ENCODE measurements at regions of chr17 and their contacts with region 1.

Region 1: GRCh38 chr17:20992987-20993862 is 49.6 kb downstream of the USP22 start:
- DNase-seq: peak in 1 of 2 donors; percentile 45
- ATAC-seq: peak; percentile 55 to 57
- H3K4me3 ChIP-seq: peak overlapping the region in 2 of 4 donors; percentile 21 to 34
- H3K27ac ChIP-seq: no peak overlapping the region
- H3K4me1 ChIP-seq: peaks cover 8 to 21% of the 10 kb centered on the region in 2 donors
- H3K27me3 ChIP-seq: no peaks in the 10 kb centered on the region
- CTCF ChIP-seq: peak; percentile 81 to 88 (median 88)
- POLR2A ChIP-seq: no peak

Region 2: DNA sequence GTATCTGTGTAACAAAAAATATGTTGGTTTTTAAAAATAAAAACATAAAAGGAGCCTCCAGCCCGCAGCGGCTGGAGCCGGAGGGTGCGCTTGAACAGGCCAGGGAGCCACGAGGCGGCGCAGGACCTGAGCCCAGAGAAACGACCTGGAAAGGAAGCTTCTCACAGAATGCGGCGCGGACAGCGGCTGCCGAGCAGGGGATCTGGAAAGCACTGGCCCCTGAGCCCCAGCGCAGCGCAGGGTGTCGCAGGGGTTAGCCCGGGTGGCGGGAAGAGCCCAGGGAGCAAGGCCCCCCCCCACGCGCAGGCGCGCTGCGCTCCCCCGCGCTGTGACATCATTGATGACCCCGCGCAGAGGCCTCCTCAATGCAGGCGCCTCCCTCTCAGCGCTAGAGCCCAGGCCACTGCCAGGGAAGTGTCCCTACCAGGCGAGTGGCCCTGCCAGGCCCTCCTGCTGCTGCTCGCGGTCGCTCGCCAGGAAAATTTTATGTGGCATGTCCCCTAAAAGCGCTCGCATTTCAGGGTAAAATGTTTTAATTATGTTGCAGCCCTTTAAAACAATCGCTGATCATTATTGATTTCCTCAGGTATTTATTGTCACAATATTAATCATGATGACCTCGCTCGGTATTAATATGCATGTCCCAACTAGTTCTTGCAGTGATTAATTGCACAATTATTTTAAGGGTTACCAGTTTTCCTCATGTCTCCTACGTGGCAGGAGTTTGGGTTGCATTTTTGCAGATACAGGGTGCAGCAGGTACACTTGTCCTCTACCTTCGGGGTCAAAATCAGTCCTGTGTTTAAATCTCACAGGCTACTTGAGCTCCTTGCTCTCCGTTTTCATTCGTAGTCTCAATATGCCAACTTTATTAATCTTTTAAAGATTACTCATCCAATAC is 84.6 kb before region 1 on chr17:
- in situ Hi-C with region 1: no loop called
- intact Hi-C with region 1: loop called (anchors 5 kb)
- DNase-seq: peak; percentile 82 to 90
- ATAC-seq: peak; percentile 95 to 98
- H3K4me3 ChIP-seq: peak overlapping the region; percentile 58 to 85 (median 65)
- H3K27ac ChIP-seq: peak overlapping the region; percentile 88 to 96 (median 91)
- H3K4me1 ChIP-seq: peaks cover 6 to 16% of the 10 kb centered on the region in 2 donors
- H3K27me3 ChIP-seq: no peaks in the 10 kb centered on the region
- CTCF ChIP-seq: peak; percentile 47 to 73 (median 55)
- POLR2A ChIP-seq: peak in 1 of 2 donors; percentile 45

Region 3: GRCh38 chr17:20944014-20944865 is 49.0 kb before region 1 on chr17:
- in situ Hi-C with region 1: loop called in 1 of 4 experiments (anchors 10 kb)
- intact Hi-C with region 1: loop called (anchors 1 kb)
- DNase-seq: peak in 1 of 2 donors; percentile 56
- ATAC-seq: peak in 1 of 2 donors; percentile 84
- H3K4me3 ChIP-seq: no peak overlapping the region
- H3K27ac ChIP-seq: no peak overlapping the region
- H3K4me1 ChIP-seq: no peaks in the 10 kb centered on the region
- H3K27me3 ChIP-seq: no peaks in the 10 kb centered on the region
- CTCF ChIP-seq: peak in 4 of 5 experiments; percentile 19 to 66 (median 50)
- POLR2A ChIP-seq: no peak

Region 4: DNA sequence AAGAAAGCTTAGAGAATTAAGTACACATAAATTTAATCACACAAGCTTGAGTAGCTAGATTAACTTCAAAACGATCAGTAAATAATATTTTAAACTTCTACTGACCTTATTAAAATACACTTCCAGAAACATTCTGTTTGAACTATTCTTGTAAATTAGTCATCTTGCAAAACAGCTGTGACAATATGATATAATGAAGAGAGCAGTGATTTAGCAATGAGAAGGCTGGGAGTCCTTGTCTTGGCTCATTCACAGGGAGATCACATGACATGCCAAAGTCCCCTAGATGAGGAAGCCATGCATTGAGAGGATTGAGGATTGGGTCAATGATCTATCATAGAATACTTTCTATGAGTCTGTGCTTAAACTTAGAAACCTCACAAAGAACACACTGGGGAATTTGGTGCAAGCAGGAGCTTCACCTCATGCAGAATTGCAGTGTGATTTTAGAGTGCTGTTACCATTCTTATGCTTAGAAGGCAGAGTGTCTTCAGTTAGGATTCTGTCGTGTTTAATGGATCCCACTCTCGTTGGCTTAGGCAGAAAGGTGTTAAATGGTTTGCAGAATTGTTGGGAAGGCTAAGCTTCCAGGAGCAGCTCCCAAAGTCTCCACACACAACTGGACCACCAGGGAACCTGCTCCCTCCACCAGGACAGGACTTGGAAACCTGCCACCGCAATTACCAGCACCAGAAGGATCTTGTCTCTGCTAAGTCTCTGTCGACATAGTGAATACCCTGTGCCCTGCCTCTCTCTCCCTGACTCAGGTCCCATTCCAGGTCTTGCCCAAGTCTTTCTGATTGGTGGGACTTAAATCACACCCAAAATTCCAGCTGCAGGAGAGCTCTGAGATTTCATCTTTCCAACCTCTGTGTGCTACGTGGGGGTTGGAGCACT is 37.5 kb before region 1 on chr17:
- in situ Hi-C with region 1: no loop called
- intact Hi-C with region 1: no loop called
- DNase-seq: peak; percentile 39 to 50
- ATAC-seq: peak; percentile 89 to 96
- H3K4me3 ChIP-seq: peak overlapping the region in 1 of 4 donors; percentile 7
- H3K27ac ChIP-seq: peak overlapping the region; percentile 61 to 91 (median 73)
- H3K4me1 ChIP-seq: peaks cover 18 to 33% of the 10 kb centered on the region in 2 donors
- H3K27me3 ChIP-seq: no peaks in the 10 kb centered on the region
- CTCF ChIP-seq: no peak
- POLR2A ChIP-seq: no peak

Region 5: DNA sequence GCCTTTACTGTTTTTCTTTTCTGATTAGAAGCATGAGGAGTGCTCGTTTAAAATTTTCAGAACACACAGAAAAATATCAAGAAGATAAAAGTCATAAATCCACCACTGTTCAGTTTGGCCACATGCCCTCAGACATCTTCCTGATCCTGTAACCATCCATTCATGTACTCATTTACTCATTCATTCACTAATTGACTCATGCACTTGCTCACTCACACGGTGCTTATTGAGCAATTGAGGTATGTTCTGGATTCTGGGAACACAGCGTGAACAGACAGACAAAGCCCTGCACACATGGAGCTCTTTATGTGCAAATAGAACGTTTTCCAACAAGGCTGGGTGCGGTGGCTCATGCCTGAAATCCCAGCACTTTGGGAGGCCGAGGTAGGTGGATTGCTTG is 270.1 kb after region 1 on chr17:
- in situ Hi-C with region 1: no loop called
- intact Hi-C with region 1: no loop called
- DNase-seq: no peak
- ATAC-seq: peak; percentile 56 to 90
- H3K4me3 ChIP-seq: no peak overlapping the region
- H3K27ac ChIP-seq: peak overlapping the region in 2 of 4 donors; percentile 9 to 57
- H3K4me1 ChIP-seq: peaks cover 6 to 21% of the 10 kb centered on the region in 2 donors
- H3K27me3 ChIP-seq: no peaks in the 10 kb centered on the region
- CTCF ChIP-seq: no peak
- POLR2A ChIP-seq: no peak

Measured in gastrocnemius medialis (tissue), 4 donors.